ENCODE measurements at regions of chr3 and their contacts with region 1.

Region 1: GRCh38 chr3:108477511-108478147 is 32.8 kb downstream of the MYH15 start:
- DNase-seq: peak; percentile 77
- H3K4me3 Mint-ChIP-seq: no peak overlapping the region
- H3K27ac Mint-ChIP-seq: no peak overlapping the region
- H3K4me1 Mint-ChIP-seq: no peaks in the 10 kb centered on the region
- H3K27me3 Mint-ChIP-seq: no peaks in the 10 kb centered on the region
- CTCF ChIP-seq: peak; percentile 62

Region 2: DNA sequence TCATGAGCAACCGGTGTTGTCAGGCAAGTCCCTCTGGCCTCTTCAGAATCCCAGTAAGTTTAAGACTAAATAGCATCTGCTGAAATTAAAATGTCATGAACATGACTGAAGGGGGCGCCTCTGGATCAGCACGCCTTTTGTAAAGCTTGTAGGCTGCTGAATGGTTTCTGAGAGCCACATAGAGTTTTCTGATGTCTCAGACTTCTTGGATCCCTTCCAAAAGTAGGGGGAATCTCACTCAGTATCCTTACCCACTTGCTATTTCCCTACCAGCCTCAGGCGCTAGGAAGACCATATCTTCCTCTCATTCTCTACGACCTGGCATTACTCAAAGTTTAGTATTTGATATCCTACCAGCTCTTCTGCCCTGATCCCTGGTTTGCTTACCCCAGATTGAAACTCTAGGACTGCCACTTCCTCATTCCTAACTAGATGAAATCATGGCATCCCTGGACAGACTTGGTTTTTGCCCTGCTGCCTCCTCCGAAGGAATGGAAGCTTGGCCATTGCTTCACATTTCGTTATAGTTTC is 324.1 kb before region 1 on chr3:
- CTCF ChIA-PET with region 1: interaction called, 4 read pairs
- POLR2A ChIA-PET with region 1: no interaction called
- intact Hi-C with region 1: loop called (anchors 1 kb)
- DNase-seq: peak; percentile 78
- H3K4me3 Mint-ChIP-seq: no peak overlapping the region
- H3K27ac Mint-ChIP-seq: no peak overlapping the region
- H3K4me1 Mint-ChIP-seq: no peaks in the 10 kb centered on the region
- H3K27me3 Mint-ChIP-seq: no peaks in the 10 kb centered on the region
- CTCF ChIP-seq: peak; percentile 39